A673 (cell line): ENCODE measurements at regions of chr2 and their contacts with region 1.

Region 1: GRCh38 chr2:176601066-176601465 is 331.8 kb downstream of the MTX2 start:
- DNase-seq: peak; percentile 31
- H3K4me3 ChIP-seq: no peak overlapping the region
- H3K27ac ChIP-seq: no peak overlapping the region
- H3K4me1 ChIP-seq: peaks cover 5% of the 10 kb centered on the region
- H3K27me3 ChIP-seq: no peaks in the 10 kb centered on the region
- CTCF ChIP-seq: no peak

Region 2: GRCh38 chr2:175964195-175964594 is 636.9 kb before region 1 on chr2:
- CTCF ChIA-PET with region 1: no interaction called
- POLR2A ChIA-PET with region 1: no interaction called
- intact Hi-C with region 1: no loop called
- DNase-seq: no peak
- H3K4me3 ChIP-seq: no peak overlapping the region
- H3K27ac ChIP-seq: no peak overlapping the region
- H3K4me1 ChIP-seq: no peaks in the 10 kb centered on the region
- H3K27me3 ChIP-seq: no peaks in the 10 kb centered on the region
- CTCF ChIP-seq: peak; percentile 36

Region 3: DNA sequence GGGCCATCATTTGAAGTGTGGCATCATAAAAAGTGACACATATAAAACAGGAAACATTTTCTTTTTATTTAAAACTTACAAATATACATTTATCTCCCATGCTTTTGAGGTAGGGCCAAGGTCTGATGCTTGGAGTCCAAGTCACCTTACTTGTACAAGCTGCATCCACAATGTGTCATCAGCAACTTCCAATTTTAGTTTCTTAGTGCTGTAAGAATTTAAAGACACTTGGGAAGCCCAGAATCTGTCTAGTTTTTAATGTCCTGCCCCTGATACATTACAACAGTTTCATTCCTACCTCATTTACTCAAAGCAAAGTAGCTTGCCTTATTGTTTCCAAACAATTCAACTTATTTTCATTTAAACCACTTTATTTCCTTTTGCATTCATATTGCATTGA is 34.1 kb before region 1 on chr2:
- CTCF ChIA-PET with region 1: no interaction called
- POLR2A ChIA-PET with region 1: no interaction called
- intact Hi-C with region 1: no loop called
- DNase-seq: no peak
- H3K4me3 ChIP-seq: no peak overlapping the region
- H3K27ac ChIP-seq: no peak overlapping the region
- H3K4me1 ChIP-seq: peaks cover 12% of the 10 kb centered on the region
- H3K27me3 ChIP-seq: no peaks in the 10 kb centered on the region
- CTCF ChIP-seq: no peak

Region 4: GRCh38 chr2:176613323-176613987 is 12.4 kb after region 1 on chr2:
- CTCF ChIA-PET with region 1: no interaction called
- POLR2A ChIA-PET with region 1: interaction called, 3 read pairs
- intact Hi-C with region 1: loop called (anchors 1 kb)
- DNase-seq: peak; percentile 82
- H3K4me3 ChIP-seq: peak overlapping the region; percentile 20
- H3K27ac ChIP-seq: peak overlapping the region; percentile 39
- H3K4me1 ChIP-seq: peaks cover 28% of the 10 kb centered on the region
- H3K27me3 ChIP-seq: no peaks in the 10 kb centered on the region
- CTCF ChIP-seq: no peak